Activated CD4-positive, alpha-beta T cell treated with anti-CD3 and anti-CD28 coated beads for 36 hours (primary cell): ENCODE measurements at regions of chr17 and their contacts with region 1.

Region 1: GRCh38 chr17:65656382-65657250 is 95.2 kb upstream of the AXIN2 start:
- DNase-seq: peak; percentile 80
- ATAC-seq: peak; percentile 98
- H3K4me3 Mint-ChIP-seq: no peak overlapping the region
- H3K27ac Mint-ChIP-seq: peak overlapping the region; percentile 74
- H3K4me1 Mint-ChIP-seq: peaks cover 33% of the 10 kb centered on the region
- H3K27me3 Mint-ChIP-seq: peaks cover 4% of the 10 kb centered on the region

Region 2: GRCh38 chr17:65231662-65232335 is 424.8 kb before region 1 on chr17:
- CTCF ChIA-PET with region 1: no interaction called
- POLR2A ChIA-PET with region 1: interaction called, 4 read pairs
- intact Hi-C with region 1: loop called in 1 of 2 experiments (anchors 1 kb)
- DNase-seq: peak; percentile 70
- ATAC-seq: peak; percentile 25
- H3K4me3 Mint-ChIP-seq: no peak overlapping the region
- H3K27ac Mint-ChIP-seq: no peak overlapping the region
- H3K4me1 Mint-ChIP-seq: peaks cover 31% of the 10 kb centered on the region
- H3K27me3 Mint-ChIP-seq: peaks cover 10% of the 10 kb centered on the region

Region 3: GRCh38 chr17:65523853-65524664 is 132.6 kb before region 1 on chr17:
- CTCF ChIA-PET with region 1: no interaction called
- POLR2A ChIA-PET with region 1: no interaction called
- intact Hi-C with region 1: loop called in 1 of 2 experiments (anchors 2 kb)
- DNase-seq: no peak
- ATAC-seq: no peak
- H3K4me3 Mint-ChIP-seq: no peak overlapping the region
- H3K27ac Mint-ChIP-seq: peak overlapping the region; percentile 53
- H3K4me1 Mint-ChIP-seq: peaks cover 26% of the 10 kb centered on the region
- H3K27me3 Mint-ChIP-seq: no peaks in the 10 kb centered on the region

Region 4: GRCh38 chr17:65561394-65562205 is 95.0 kb before region 1 on chr17 and contains the start of gene AXIN2:
- CTCF ChIA-PET with region 1: interaction called, 3 read pairs
- POLR2A ChIA-PET with region 1: interaction called, 3 read pairs
- intact Hi-C with region 1: loop called (anchors 1 to 5 kb)
- DNase-seq: peak; percentile 92
- ATAC-seq: peak; percentile 82
- H3K4me3 Mint-ChIP-seq: no peak within 1 kb of the TSS
- H3K27ac Mint-ChIP-seq: peak within 1 kb of the TSS; percentile 51
- H3K4me1 Mint-ChIP-seq: peaks cover 28% of the 10 kb centered on the region
- H3K27me3 Mint-ChIP-seq: peaks cover 4% of the 10 kb centered on the region
- total RNA-seq, gene AXIN2: 2.6 to 3.0 TPM

Region 5: DNA sequence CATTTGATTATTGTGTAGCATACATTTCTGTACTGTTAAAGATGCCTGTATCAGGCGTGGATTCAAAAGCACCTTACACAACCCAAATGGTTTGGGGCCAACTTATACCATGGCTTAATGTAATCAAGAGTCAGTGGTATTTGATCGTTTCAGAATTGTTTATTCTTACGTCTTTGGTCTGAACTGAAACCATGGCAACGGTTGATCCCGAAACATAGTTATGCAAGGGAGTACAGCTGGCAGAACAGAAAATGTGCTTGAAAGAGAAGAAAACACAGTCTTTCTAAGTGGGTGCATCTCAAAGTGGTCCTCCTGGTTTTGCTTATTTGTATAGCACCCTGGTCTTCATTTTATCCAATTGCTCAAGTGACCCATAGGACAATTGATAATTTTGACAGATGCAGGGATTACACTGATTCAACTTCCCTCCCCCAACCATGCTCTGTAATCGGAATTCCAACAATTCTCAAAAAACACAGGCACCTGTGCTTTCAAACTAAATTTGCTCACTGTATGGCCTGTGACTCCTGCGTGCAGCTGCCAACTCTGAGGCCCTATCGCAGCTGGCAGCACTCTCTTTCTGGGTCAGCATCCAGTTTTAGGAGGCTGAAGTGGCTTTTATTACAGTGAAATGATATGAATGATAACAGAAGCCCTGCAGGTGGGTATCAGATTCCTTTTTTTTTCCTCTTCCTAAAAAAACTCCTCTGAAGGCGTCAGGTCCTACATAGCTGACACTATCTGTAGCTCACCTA is 18.2 kb before region 1 on chr17:
- CTCF ChIA-PET with region 1: no interaction called
- POLR2A ChIA-PET with region 1: no interaction called
- intact Hi-C with region 1: no loop called
- DNase-seq: no peak
- ATAC-seq: no peak
- H3K4me3 Mint-ChIP-seq: no peak overlapping the region
- H3K27ac Mint-ChIP-seq: no peak overlapping the region
- H3K4me1 Mint-ChIP-seq: peaks cover 2% of the 10 kb centered on the region
- H3K27me3 Mint-ChIP-seq: no peaks in the 10 kb centered on the region

Region 6: GRCh38 chr17:65742403-65743307 is 86.0 kb after region 1 on chr17:
- CTCF ChIA-PET with region 1: no interaction called
- POLR2A ChIA-PET with region 1: no interaction called
- intact Hi-C with region 1: loop called in 1 of 2 experiments (anchors 10 kb)
- DNase-seq: no peak
- ATAC-seq: peak; percentile 44
- H3K4me3 Mint-ChIP-seq: no peak overlapping the region
- H3K27ac Mint-ChIP-seq: peak overlapping the region; percentile 31
- H3K4me1 Mint-ChIP-seq: peaks cover 24% of the 10 kb centered on the region
- H3K27me3 Mint-ChIP-seq: no peaks in the 10 kb centered on the region